ENCODE measurements at regions of chr11 and their contacts with region 1.

Region 1: GRCh38 chr11:111932611-111932950 is 4.6 kb upstream of the DIXDC1 start:
- DNase-seq: no peak
- H3K4me3 ChIP-seq: no peak overlapping the region
- H3K27ac ChIP-seq: no peak overlapping the region
- H3K27me3 ChIP-seq: no peaks in the 10 kb centered on the region
- CTCF ChIP-seq: no peak

Region 2: DNA sequence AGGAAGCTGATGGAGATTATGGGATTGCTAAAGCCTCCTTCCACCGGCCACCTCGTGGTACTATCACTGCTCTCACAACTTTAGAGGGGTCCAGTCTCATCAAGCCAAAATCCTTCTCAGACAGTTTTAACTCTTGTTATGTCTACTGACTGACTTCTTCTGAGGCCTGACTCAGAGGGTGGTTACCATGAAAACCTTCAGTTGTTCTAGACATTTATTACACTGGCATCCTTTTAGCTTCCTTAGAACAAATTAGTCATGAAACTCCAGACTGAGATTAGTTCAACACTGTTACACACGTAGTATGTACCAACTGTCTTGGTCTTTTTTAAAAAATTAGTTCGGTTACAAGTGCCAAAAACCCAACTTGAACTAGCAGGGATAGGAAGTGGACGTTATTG is 12.1 kb after region 1 on chr11:
- CTCF ChIA-PET with region 1: interaction called, 10 read pairs
- POLR2A ChIA-PET with region 1: interaction called, 4 read pairs
- DNase-seq: no peak
- H3K4me3 ChIP-seq: no peak overlapping the region
- H3K27ac ChIP-seq: peak overlapping the region; percentile 41
- H3K27me3 ChIP-seq: no peaks in the 10 kb centered on the region
- CTCF ChIP-seq: no peak

Region 3: GRCh38 chr11:112213753-112214152 is 281.2 kb after region 1 on chr11:
- CTCF ChIA-PET with region 1: no interaction called
- POLR2A ChIA-PET with region 1: no interaction called
- DNase-seq: no peak
- H3K4me3 ChIP-seq: no peak overlapping the region
- H3K27ac ChIP-seq: no peak overlapping the region
- H3K27me3 ChIP-seq: no peaks in the 10 kb centered on the region
- CTCF ChIP-seq: no peak

Measured in AG04450 (cell line).